Activated naive CD4-positive, alpha-beta T cell treated with anti-CD3 and anti-CD28 coated beads for 36 hours (primary cell): ENCODE measurements at regions of chr10 and their contacts with region 1.

Region 1: GRCh38 chr10:123109466-123109865 is 26.3 kb upstream of the HMX3 start:
- DNase-seq: no peak
- H3K4me3 Mint-ChIP-seq: no peak overlapping the region
- H3K27ac Mint-ChIP-seq: no peak overlapping the region
- H3K4me1 Mint-ChIP-seq: no peaks in the 10 kb centered on the region
- H3K27me3 Mint-ChIP-seq: peaks cover 13% of the 10 kb centered on the region

Region 2: DNA sequence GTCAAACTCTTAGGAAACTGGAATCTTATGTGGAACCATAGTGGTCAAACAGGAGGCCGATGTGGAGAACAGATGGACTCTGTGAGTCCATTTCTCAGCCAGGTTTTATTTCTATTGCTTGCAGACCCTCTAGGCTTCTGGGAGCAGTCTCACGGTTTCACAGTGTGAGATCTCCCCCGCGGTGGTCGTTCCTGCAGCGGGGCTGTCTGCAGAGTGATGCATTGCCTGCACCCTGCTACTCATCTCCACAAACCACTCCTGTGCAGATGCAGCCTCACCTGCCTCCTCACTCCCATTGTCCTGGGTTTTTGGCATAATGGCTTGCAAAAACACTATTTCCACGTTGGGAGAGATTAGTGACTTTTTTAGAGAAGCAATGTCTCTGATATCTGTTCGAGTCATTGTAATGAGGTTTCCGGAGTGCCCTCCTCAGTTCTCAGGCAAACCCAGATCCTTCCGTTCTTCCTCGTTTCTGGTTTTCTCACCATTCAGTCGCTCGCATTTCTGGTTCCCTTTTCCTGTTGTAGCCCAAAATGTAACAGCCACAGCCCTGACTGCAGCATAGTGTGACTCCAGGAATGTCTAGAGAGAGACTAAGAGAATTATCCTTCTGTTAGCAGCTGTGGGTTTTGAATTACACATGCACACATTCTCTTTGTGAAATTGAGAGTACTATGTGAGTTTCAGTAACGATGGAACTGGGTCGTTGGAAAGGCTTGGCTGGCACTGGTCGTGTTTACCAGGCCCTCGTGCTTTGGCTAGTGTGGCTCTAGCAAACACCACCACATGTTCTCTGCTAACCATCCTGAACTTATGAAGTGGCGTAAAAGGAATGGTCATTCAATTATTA is 70.5 kb before region 1 on chr10:
- CTCF ChIA-PET with region 1: no interaction called
- intact Hi-C with region 1: no loop called
- DNase-seq: no peak
- H3K4me3 Mint-ChIP-seq: no peak overlapping the region
- H3K27ac Mint-ChIP-seq: no peak overlapping the region
- H3K4me1 Mint-ChIP-seq: peaks cover 3% of the 10 kb centered on the region
- H3K27me3 Mint-ChIP-seq: no peaks in the 10 kb centered on the region

Region 3: GRCh38 chr10:123175389-123176387 is 66.2 kb after region 1 on chr10:
- CTCF ChIA-PET with region 1: no interaction called
- intact Hi-C with region 1: no loop called
- DNase-seq: no peak
- H3K4me3 Mint-ChIP-seq: no peak overlapping the region
- H3K27ac Mint-ChIP-seq: no peak overlapping the region
- H3K4me1 Mint-ChIP-seq: peaks cover 2% of the 10 kb centered on the region
- H3K27me3 Mint-ChIP-seq: no peaks in the 10 kb centered on the region

Region 4: DNA sequence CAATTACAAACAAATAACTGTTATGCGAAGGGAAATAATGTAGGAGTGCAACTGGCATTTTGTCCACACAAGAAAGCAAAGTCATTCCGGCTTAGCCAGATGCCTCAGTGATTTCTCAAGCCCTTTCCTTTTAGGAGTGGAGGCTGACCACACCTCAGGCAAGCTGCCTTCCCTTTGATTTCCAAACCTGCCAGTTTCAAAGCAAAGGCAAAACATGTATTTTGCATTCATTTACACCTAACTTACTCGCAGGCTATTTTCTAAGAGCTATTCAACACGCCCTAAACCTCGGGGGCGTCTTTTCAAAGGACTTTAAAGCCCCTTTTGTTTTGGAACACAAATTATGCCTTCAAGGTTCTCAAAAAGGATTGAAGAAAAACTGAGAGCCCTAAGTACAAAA is 672.6 kb after region 1 on chr10:
- CTCF ChIA-PET with region 1: no interaction called
- intact Hi-C with region 1: loop called (anchors 5 kb)
- DNase-seq: no peak
- H3K4me3 Mint-ChIP-seq: no peak overlapping the region
- H3K27ac Mint-ChIP-seq: no peak overlapping the region
- H3K4me1 Mint-ChIP-seq: no peaks in the 10 kb centered on the region
- H3K27me3 Mint-ChIP-seq: peaks cover 33% of the 10 kb centered on the region

Region 5: GRCh38 chr10:124341768-124342135 is 1232.3 kb after region 1 on chr10:
- CTCF ChIA-PET with region 1: no interaction called
- intact Hi-C with region 1: no loop called
- DNase-seq: peak; percentile 66
- H3K4me3 Mint-ChIP-seq: no peak overlapping the region
- H3K27ac Mint-ChIP-seq: no peak overlapping the region
- H3K4me1 Mint-ChIP-seq: peaks cover 10% of the 10 kb centered on the region
- H3K27me3 Mint-ChIP-seq: no peaks in the 10 kb centered on the region